ENCODE measurements at regions of chrX and their contacts with region 1.

Region 1: GRCh38 chrX:54639346-54640102 is 109.5 kb downstream of the GNL3L start:
- ATAC-seq: peak; percentile 93 to 98 (median 97)
- H3K4me3 ChIP-seq: peak overlapping the region; percentile 50 to 55 (median 52)
- H3K27ac ChIP-seq: peak overlapping the region; percentile 94 to 97
- H3K4me1 ChIP-seq: peaks cover 9 to 11% of the 10 kb centered on the region in 2 donors

Region 2: DNA sequence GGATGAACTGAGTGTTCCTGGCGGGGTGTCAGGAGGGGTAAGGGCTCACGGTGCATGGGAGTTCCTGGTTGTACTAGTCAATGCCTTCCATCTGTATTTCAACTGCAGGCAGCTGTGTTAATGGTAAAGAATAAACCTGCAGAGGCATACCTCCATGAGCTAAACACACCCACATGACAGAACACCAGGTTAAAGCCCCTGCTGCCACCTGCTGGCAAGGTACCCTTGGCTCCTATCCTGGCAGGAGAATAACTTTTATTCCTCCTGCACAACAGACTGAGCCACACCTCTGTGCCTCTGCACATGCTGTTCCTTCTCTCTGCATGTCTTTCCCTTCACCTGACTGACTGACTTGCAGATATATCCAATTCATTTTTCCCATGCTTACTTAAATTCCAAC is 147.4 kb after region 1 on chrX:
- in situ Hi-C with region 1: loop called in 1 of 9 experiments (anchors 25 kb)
- ATAC-seq: peak in 4 of 8 experiments; percentile 24 to 67 (median 34)
- H3K4me3 ChIP-seq: no peak overlapping the region
- H3K27ac ChIP-seq: no peak overlapping the region
- H3K4me1 ChIP-seq: no peaks in the 10 kb centered on the region